Common myeloid progenitor, CD34-positive (primary cell): ENCODE measurements at regions of chr16 and their contacts with region 1.

Region 1: GRCh38 chr16:84672276-84673202 is 24.2 kb downstream of the KLHL36 start:
- DNase-seq: peak; percentile 75 to 84 (median 81)
- H3K4me3 ChIP-seq: no peak overlapping the region
- H3K27ac ChIP-seq: no peak overlapping the region
- H3K4me1 ChIP-seq: no peaks in the 10 kb centered on the region
- H3K27me3 ChIP-seq: peaks cover 0 to 2% (median 0%) of the 10 kb centered on the region in 5 experiments

Region 2: DNA sequence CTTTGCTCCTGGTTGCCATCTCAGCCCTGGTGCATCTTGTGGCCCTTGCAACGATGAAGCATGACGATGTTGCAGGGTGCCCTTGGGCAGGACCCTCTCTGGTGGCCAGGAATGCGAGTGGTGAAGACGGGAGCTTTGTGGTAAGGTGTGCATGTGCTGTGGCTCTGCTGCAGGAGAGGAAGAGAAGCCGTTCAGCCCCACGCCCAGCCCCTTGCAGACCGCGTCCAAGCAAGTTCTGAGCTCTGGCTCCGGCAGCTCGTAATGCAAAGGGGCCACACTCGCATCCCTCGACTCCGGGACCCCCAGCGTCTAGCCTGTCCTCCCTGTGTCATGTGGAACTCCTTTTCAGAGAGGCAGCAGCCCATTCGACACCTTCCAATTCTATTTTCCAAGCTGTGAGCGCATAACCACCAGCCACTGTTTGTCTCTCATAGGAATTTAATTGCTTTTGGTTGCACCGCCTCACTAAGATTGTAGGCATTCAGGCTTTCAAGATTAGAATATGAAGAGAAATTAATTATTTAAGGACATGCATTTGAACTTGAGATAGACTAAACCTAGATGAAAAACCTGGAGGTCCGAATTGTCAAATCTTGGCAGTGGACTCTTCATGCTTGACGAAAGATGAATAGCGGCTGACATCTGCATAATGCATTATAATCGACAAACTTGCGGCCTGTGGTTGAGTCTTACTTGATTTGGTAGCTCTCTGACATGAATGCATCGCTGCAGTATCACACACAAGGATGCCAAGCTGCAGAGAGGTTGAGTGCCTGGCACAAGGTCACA is 411.6 kb before region 1 on chr16:
- CTCF ChIA-PET with region 1: no interaction called
- POLR2A ChIA-PET with region 1: no interaction called
- DNase-seq: no peak
- H3K4me3 ChIP-seq: no peak overlapping the region
- H3K27ac ChIP-seq: no peak overlapping the region
- H3K4me1 ChIP-seq: no peaks in the 10 kb centered on the region
- H3K27me3 ChIP-seq: peaks cover 0 to 19% (median 4%) of the 10 kb centered on the region in 5 experiments

Region 3: GRCh38 chr16:84661418-84662060 is 11.0 kb before region 1 on chr16:
- CTCF ChIA-PET with region 1: interaction called, 13 read pairs
- POLR2A ChIA-PET with region 1: no interaction called
- DNase-seq: no peak
- H3K4me3 ChIP-seq: no peak overlapping the region
- H3K27ac ChIP-seq: no peak overlapping the region
- H3K4me1 ChIP-seq: peaks cover 0 to under 1% (median under 1%) of the 10 kb centered on the region in 4 experiments
- H3K27me3 ChIP-seq: no peaks in the 10 kb centered on the region

Region 4: GRCh38 chr16:84699712-84700445 is 27.3 kb after region 1 on chr16 and contains the start of gene USP10:
- CTCF ChIA-PET with region 1: interaction called, 14 read pairs
- POLR2A ChIA-PET with region 1: interaction called, 3 read pairs
- DNase-seq: peak; percentile 75 to 84 (median 84)
- H3K4me3 ChIP-seq: peak within 1 kb of the TSS; percentile 92 to 99 (median 97)
- H3K27ac ChIP-seq: peak within 1 kb of the TSS; percentile 75 to 88
- H3K4me1 ChIP-seq: peaks cover 10 to 32% (median 18%) of the 10 kb centered on the region in 4 experiments
- H3K27me3 ChIP-seq: no peaks in the 10 kb centered on the region

Region 5: DNA sequence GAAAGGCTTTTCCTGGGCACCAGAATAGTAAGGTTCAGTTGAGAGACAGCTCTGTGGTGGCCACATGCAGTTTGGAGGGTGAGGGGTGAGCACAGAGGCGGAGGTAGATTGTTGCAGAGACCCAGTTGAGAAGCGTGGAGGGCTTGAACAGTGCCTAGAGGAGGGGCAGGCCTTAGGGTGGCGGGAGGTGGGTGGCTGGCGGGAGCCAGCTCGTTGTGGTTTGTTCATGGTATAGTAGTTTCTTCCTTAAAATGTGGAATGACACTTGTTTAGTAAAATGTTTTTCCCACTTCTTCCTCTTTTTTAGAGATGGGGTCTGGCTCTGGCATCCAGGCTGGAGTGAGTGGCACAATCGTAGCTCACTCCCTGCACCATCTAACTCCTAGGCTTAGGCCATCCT is 41.5 kb after region 1 on chr16:
- CTCF ChIA-PET with region 1: interaction called, 15 read pairs
- POLR2A ChIA-PET with region 1: no interaction called
- DNase-seq: peak in 2 of 3 donors; percentile 30 to 45
- H3K4me3 ChIP-seq: peak overlapping the region in 1 of 7 experiments; percentile 36
- H3K27ac ChIP-seq: no peak overlapping the region
- H3K4me1 ChIP-seq: peaks cover 2 to 32% (median 18%) of the 10 kb centered on the region in 4 experiments
- H3K27me3 ChIP-seq: no peaks in the 10 kb centered on the region

Region 6: GRCh38 chr16:84726079-84726668 is 53.6 kb after region 1 on chr16:
- CTCF ChIA-PET with region 1: interaction called, 70 read pairs
- POLR2A ChIA-PET with region 1: no interaction called
- DNase-seq: peak; percentile 79 to 85 (median 84)
- H3K4me3 ChIP-seq: peak overlapping the region in 6 of 7 experiments; percentile 52 to 78 (median 69)
- H3K27ac ChIP-seq: peak overlapping the region; percentile 20 to 69
- H3K4me1 ChIP-seq: peaks cover 29 to 88% (median 51%) of the 10 kb centered on the region in 4 experiments
- H3K27me3 ChIP-seq: no peaks in the 10 kb centered on the region